Breast epithelium (tissue), 4 donors: ENCODE measurements at regions of chr14 and their contacts with region 1.

Region 1: GRCh38 chr14:74593241-74593953 is 18.6 kb downstream of the LTBP2 start:
- DNase-seq: no peak
- H3K4me3 ChIP-seq: no peak overlapping the region
- H3K27ac ChIP-seq: peak overlapping the region; percentile 67 to 90
- H3K4me1 ChIP-seq: peaks cover 0 to 23% of the 10 kb centered on the region in 2 donors
- H3K27me3 ChIP-seq: no peaks in the 10 kb centered on the region
- CTCF ChIP-seq: no peak
- POLR2A ChIP-seq: no peak

Region 2: GRCh38 chr14:74179856-74180255 is 413.5 kb before region 1 on chr14:
- intact Hi-C with region 1: loop called (anchors 5 kb)
- DNase-seq: no peak
- H3K4me3 ChIP-seq: no peak overlapping the region
- H3K27ac ChIP-seq: no peak overlapping the region
- H3K4me1 ChIP-seq: no peaks in the 10 kb centered on the region
- H3K27me3 ChIP-seq: no peaks in the 10 kb centered on the region
- CTCF ChIP-seq: no peak
- POLR2A ChIP-seq: no peak